Activated CD8-positive, alpha-beta memory T cell treated with anti-CD3 and anti-CD28 coated beads, Interleukin-2, amount 10 ng/mL, durations not matched to agents 7 days and 5 days (primary cell): ENCODE measurements at regions of chr6 and their contacts with region 1.

Region 1: DNA sequence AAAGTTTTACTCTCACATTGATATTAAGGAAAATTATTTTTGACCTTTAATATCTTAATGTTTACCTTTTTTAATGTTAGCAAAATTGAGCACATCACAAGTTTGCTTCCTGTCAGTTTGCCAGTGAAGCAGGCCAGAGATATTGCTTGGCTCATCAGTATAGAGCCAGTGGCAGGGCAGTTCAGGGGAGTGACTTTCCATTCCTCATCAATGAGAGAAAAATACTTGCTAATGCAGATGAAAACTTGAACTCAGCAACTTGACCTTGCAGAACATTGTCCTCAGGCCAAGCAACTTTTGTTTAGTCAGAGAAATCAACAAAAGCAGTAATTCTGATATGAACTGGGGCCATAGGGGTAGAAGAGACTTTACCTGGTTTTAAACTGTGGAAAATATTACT is 6.9 kb downstream of the TAB2 start:
- DNase-seq: no peak
- ATAC-seq: peak; percentile 26
- H3K4me3 Mint-ChIP-seq: peak overlapping the region; percentile 30
- H3K27ac Mint-ChIP-seq: peak overlapping the region; percentile 72
- H3K4me1 Mint-ChIP-seq: peaks cover 71% of the 10 kb centered on the region
- H3K27me3 Mint-ChIP-seq: no peaks in the 10 kb centered on the region

Region 2: DNA sequence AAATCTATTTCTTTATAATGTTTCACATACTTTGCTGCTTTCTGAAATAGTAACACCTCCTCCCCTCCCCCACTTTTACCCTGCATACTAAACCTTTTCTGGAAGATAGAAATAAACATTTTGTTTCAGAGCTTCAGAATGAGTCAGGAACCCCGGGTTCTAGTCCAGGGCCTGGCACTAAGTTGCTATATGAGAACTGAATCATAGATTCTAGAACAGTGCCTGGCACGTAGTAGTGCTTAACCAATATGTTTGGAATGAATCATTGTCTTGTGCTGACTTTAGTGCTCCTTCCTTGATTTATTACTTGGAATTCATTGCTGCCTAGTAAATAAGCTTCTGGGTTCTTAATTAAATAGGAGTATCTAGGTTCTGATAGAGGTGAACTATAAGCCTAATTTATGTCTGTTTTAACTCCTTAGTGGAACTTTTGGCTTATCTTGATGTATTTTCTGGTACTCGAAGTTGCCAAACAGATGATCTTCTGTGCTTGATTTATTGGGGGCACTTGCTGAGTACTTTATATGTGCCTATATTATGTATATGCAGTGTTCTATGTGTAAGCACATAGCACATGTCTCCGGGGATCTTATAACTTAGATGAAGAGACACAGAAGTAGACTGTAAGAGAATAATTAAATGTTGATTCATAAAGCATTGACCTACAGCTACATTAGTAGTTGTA is 11.6 kb after region 1 on chr6:
- CTCF ChIA-PET with region 1: interaction called, 23 read pairs
- DNase-seq: peak; percentile 65
- ATAC-seq: peak; percentile 85
- H3K4me3 Mint-ChIP-seq: peak overlapping the region; percentile 52
- H3K27ac Mint-ChIP-seq: peak overlapping the region; percentile 80
- H3K4me1 Mint-ChIP-seq: peaks cover 83% of the 10 kb centered on the region
- H3K27me3 Mint-ChIP-seq: no peaks in the 10 kb centered on the region